GM23248 (cell line): ENCODE measurements at regions of chr1 and their contacts with region 1.

Region 1: GRCh38 chr1:181044449-181044966 is 10.7 kb downstream of the MR1 start:
- DNase-seq: no peak
- H3K4me3 ChIP-seq: no peak overlapping the region
- H3K27ac ChIP-seq: no peak overlapping the region
- H3K4me1 ChIP-seq: no peaks in the 10 kb centered on the region
- H3K27me3 ChIP-seq: no peaks in the 10 kb centered on the region

Region 2: GRCh38 chr1:181142096-181142958 is 97.8 kb after region 1 on chr1:
- in situ Hi-C with region 1: loop called (anchors 10 kb)
- DNase-seq: peak; percentile 91
- H3K4me3 ChIP-seq: peak overlapping the region; percentile 56
- H3K27ac ChIP-seq: peak overlapping the region; percentile 90
- H3K4me1 ChIP-seq: peaks cover 37% of the 10 kb centered on the region
- H3K27me3 ChIP-seq: no peaks in the 10 kb centered on the region